ENCODE measurements at regions of chr17 and their contacts with region 1.

Region 1: GRCh38 chr17:79839363-79840268 is at the start of gene CBX4:
- DNase-seq: peak; percentile 96
- ATAC-seq: peak; percentile 88 to 90 (median 89)
- H3K4me3 ChIP-seq: peak within 1 kb of the TSS; percentile 82
- H3K27ac ChIP-seq: peak within 1 kb of the TSS; percentile 82
- H3K4me1 ChIP-seq: peaks cover 48% of the 10 kb centered on the region
- H3K27me3 ChIP-seq: peaks cover 0 to 51% (median 30%) of the 10 kb centered on the region in 3 donors
- CTCF ChIP-seq: peak; percentile 80
- total RNA-seq, gene CBX4: 2.5 to 7.8 (median 4.6) TPM

Region 2: DNA sequence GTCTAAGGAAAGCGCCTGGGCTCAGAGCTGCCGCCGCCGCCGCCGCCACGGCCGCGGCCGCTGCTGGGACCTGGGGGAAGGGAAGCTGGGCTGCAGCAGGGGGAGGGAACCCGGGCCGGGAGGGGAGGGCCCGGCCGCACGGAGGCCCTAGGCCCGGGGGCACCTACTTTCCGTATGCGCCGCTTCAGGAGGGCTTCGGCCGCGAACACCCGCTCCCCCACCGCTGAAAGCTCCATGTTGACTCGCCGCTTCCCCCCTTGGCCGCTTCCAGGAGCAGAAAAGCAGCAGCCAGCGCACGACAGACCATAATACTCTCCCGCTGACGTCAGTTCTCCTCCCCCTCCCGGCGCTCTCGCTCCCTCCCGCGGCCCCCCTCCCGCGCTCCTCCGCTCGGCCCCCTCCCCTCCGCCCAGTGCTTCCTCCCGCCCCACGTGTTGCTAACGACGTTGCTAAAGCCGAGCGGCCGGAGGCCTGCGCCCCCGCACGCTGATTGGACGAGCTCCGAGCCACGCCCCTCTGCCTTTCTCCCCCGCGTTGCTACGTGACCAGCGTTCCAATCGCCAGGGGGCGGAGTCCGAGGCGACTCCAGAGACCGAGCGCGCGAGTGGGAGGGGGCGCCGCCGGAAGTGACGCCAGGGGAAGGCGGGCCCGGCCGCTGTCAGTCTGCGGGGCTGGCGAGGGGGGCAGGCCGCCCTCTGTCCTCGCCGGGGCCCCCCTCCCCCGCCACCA is 42.7 kb before region 1 on chr17 and contains the start of gene CBX8:
- intact Hi-C with region 1: loop called (anchors 2 to 5 kb)
- DNase-seq: peak; percentile 100
- ATAC-seq: peak; percentile 95 to 96 (median 96)
- H3K4me3 ChIP-seq: peak within 1 kb of the TSS; percentile 79
- H3K27ac ChIP-seq: peak within 1 kb of the TSS; percentile 82
- H3K4me1 ChIP-seq: peaks cover 32% of the 10 kb centered on the region
- H3K27me3 ChIP-seq: peaks cover 0 to 63% (median 38%) of the 10 kb centered on the region in 3 donors
- CTCF ChIP-seq: no peak
- total RNA-seq, gene CBX8: 0.40 to 3.3 (median 1.2) TPM

Region 3: GRCh38 chr17:79915850-79916430 is 76.3 kb after region 1 on chr17:
- intact Hi-C with region 1: loop called in 1 of 2 experiments (anchors 5 kb)
- DNase-seq: peak; percentile 13 to 57
- ATAC-seq: no peak
- H3K4me3 ChIP-seq: no peak overlapping the region
- H3K27ac ChIP-seq: no peak overlapping the region
- H3K4me1 ChIP-seq: peaks cover 13% of the 10 kb centered on the region
- H3K27me3 ChIP-seq: peaks cover 0 to 10% (median 0%) of the 10 kb centered on the region in 3 donors
- CTCF ChIP-seq: peak; percentile 12